Activated T-helper 2 cell treated with anti-CD3 and anti-CD28 coated beads, Interferon-gamma antibody, Interleukin-2, Interleukin-4, amounts not matched to agents 10 μg/mL and 5 μg/mL and 100 μg/mL, durations not matched to agents 14 hours and 24 hours and 36 hours (primary cell): ENCODE measurements at regions of chrX and their contacts with region 1.

Region 1: GRCh38 chrX:148633218-148633908 is 132.9 kb downstream of the AFF2 start:
- DNase-seq: no peak
- H3K4me3 Mint-ChIP-seq: no peak overlapping the region
- H3K27ac Mint-ChIP-seq: no peak overlapping the region
- H3K4me1 Mint-ChIP-seq: no peaks in the 10 kb centered on the region
- H3K27me3 Mint-ChIP-seq: no peaks in the 10 kb centered on the region

Region 2: DNA sequence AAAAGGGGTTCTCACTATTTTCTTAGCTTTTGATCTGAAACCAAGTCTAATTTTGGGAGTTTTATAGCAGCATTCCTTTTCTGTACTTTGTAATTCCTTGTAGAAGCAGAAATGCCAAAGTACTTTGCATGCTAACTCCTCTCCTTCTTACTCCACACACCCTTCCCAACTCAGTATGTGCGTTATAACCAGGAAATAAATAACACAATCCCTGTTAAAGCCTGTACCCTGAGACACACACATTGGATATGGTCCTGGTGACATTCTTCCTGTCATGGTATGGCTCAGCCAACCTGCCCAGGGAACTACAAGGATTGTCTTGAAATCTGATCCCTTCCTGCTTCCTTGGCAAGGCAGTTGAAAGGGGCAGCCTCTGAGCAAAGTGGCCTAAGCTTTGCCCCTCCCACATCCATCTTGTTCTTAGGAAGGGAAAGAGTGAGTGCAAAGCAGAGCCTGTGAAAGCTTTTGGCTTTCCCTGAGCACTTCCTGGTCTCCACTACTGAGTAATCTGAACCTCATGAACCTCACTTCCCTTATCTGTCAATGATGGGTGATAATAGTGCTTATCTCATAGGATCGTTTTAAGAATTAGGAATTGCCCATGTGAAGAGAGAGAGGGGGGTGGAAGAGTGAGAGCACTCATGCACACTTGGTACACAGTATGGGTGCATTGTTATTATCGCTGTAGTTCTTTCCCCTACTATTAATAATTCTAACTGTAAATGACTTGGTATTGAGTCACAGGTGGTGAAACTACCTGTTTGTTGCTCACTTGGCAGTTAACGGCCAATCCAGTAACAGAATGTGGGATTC is 23.6 kb before region 1 on chrX:
- intact Hi-C with region 1: no loop called
- DNase-seq: no peak
- H3K4me3 Mint-ChIP-seq: no peak overlapping the region
- H3K27ac Mint-ChIP-seq: peak overlapping the region; percentile 17
- H3K4me1 Mint-ChIP-seq: peaks cover 26% of the 10 kb centered on the region
- H3K27me3 Mint-ChIP-seq: no peaks in the 10 kb centered on the region

Region 3: GRCh38 chrX:148700021-148700420 is 66.7 kb after region 1 on chrX:
- intact Hi-C with region 1: loop called (anchors 2 kb)
- DNase-seq: no peak
- H3K4me3 Mint-ChIP-seq: no peak overlapping the region
- H3K27ac Mint-ChIP-seq: no peak overlapping the region
- H3K4me1 Mint-ChIP-seq: no peaks in the 10 kb centered on the region
- H3K27me3 Mint-ChIP-seq: no peaks in the 10 kb centered on the region

Region 4: GRCh38 chrX:149069869-149070268 is 436.5 kb after region 1 on chrX:
- intact Hi-C with region 1: no loop called
- DNase-seq: no peak
- H3K4me3 Mint-ChIP-seq: no peak overlapping the region
- H3K27ac Mint-ChIP-seq: no peak overlapping the region
- H3K4me1 Mint-ChIP-seq: peaks cover 2% of the 10 kb centered on the region
- H3K27me3 Mint-ChIP-seq: no peaks in the 10 kb centered on the region